Posterior cingulate gyrus (tissue), 11 donors: ENCODE measurements at regions of chr3 and their contacts with region 1.

Region 1: GRCh38 chr3:124014366-124014942 is 22.5 kb upstream of the ROPN1 start:
- DNase-seq: peak in 6 of 10 donors; percentile 18 to 86 (median 59)

Region 2: GRCh38 chr3:124078953-124079911 is 64.8 kb after region 1 on chr3:
- intact Hi-C with region 1: loop called (anchors 2 kb)
- DNase-seq: peak in 1 of 10 donors; percentile 34

Region 3: DNA sequence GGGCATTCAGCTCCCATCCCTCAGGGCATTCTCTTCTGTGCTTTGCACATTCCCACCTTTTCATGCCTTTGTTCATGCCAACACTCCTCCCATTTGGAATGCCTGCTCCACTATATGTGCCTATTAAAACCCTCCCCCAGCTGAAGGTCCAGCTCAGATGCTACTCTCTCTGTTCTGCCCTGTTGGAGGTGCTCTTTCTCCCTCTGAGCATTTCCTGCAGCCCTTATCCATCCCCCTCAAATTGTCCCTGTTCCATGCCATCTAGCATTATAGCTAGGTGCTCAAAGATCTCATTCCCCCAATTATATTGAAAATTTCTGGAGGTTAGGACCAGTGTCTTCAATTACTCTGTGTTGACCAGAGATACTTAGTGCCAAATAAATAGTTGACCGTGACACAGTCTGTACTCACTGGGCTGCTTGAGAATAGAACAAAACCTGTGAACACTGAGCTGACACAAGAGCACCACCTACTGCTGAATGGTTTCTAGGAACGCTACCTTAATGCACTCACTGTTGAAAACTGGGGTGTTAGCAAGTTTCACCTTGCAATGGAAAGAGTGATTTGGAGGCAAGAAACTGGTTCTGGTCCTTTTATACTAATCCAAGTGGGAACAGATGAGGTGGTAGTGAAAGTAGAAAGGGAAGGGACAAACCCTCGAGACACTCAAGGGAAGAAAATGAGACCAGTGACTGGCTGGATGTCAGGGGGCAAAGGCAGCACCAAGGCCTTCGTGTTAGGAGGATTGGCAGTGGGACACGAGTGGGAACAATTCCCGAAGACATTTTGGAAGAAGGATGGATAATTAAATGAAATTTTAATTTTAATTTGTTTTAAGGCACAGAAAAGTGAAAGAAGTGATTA is 267.2 kb after region 1 on chr3:
- intact Hi-C with region 1: loop called (anchors 5 kb)
- DNase-seq: no peak

Region 4: GRCh38 chr3:124467980-124468902 is 453.8 kb after region 1 on chr3:
- intact Hi-C with region 1: loop called (anchors 5 kb)
- DNase-seq: peak in 9 of 10 donors; percentile 40 to 94 (median 67)

Region 5: DNA sequence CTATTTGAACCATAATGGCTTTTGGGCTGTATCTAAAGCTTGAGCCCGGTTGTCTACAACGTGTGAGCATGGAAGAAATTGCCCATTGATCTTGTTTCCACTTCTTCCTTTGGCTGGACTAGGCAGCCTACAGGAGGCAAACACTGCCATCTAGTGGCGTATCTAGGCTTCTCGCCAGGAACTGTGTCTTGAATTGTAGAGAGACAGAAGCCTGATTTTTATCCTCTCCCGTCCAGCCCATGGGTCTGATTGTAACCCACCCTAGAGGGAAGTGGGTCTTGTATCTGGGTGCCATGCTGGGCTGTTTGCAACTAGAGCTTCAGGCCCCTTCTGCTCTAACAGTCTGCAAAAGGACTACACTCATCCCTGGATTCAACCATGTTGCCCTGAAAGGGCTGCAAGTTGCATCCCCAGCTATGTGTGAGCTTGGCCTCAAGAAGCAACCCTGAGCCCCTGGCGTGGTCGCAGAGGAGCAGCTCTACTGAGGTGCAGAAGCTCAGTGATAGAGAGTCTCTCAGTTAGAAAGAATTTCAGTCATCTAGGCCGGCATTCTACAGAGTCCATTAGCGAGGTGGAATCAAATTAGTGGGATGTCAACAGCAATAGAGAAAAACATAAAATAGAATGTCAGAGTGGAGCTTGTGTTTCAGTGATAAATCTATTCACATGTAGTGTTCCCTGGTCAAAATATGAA is 545.6 kb after region 1 on chr3:
- intact Hi-C with region 1: no loop called
- DNase-seq: peak; percentile 50 to 96 (median 80)